ENCODE measurements at regions of chr16 and their contacts with region 1.

Region 1: GRCh38 chr16:85717393-85718121 is 28.8 kb upstream of the GINS2 start:
- DNase-seq: peak; percentile 53 to 74 (median 69)
- H3K4me3 ChIP-seq: no peak overlapping the region
- H3K27ac ChIP-seq: no peak overlapping the region
- H3K4me1 ChIP-seq: no peaks in the 10 kb centered on the region
- H3K27me3 ChIP-seq: no peaks in the 10 kb centered on the region
- CTCF ChIP-seq: peak; percentile 62 to 92 (median 68)
- EP300 ChIP-seq: no peak
- POLR2A ChIP-seq: no peak

Region 2: GRCh38 chr16:85104821-85105391 is 612.7 kb before region 1 on chr16:
- intact Hi-C with region 1: loop called in 2 of 4 experiments (anchors 10 kb)
- DNase-seq: no peak
- H3K4me3 ChIP-seq: no peak overlapping the region
- H3K27ac ChIP-seq: no peak overlapping the region
- H3K4me1 ChIP-seq: no peaks in the 10 kb centered on the region
- H3K27me3 ChIP-seq: no peaks in the 10 kb centered on the region
- CTCF ChIP-seq: no peak
- EP300 ChIP-seq: no peak
- POLR2A ChIP-seq: no peak

Region 3: DNA sequence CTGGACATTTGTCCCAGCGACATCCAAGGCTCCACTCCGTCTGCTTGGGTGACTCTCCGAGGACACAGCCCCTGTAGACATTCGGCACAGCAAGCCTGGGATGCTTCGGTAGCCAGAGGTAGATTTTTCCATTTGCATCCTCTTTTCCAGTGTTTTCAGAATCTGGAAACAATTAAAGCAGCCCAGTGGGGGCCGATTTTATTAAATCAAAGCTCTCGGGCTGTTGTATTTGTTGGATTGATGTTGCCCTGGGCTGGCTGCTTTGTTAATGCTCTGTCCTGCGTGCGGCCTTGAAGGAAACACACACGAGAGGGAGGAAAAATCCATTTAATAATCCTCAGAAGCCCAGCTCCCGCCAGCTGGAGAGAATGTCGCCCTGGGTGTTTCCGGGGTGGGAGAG is 447.2 kb before region 1 on chr16:
- intact Hi-C with region 1: loop called in 2 of 4 experiments (anchors 2 to 5 kb)
- DNase-seq: no peak
- H3K4me3 ChIP-seq: no peak overlapping the region
- H3K27ac ChIP-seq: no peak overlapping the region
- H3K4me1 ChIP-seq: peaks cover 2% of the 10 kb centered on the region
- H3K27me3 ChIP-seq: no peaks in the 10 kb centered on the region
- CTCF ChIP-seq: no peak
- EP300 ChIP-seq: no peak
- POLR2A ChIP-seq: no peak

Region 4: GRCh38 chr16:85275533-85276249 is 441.9 kb before region 1 on chr16:
- intact Hi-C with region 1: loop called in 2 of 4 experiments (anchors 2 to 5 kb)
- DNase-seq: peak; percentile 52 to 84 (median 78)
- H3K4me3 ChIP-seq: no peak overlapping the region
- H3K27ac ChIP-seq: no peak overlapping the region
- H3K4me1 ChIP-seq: peaks cover 7% of the 10 kb centered on the region
- H3K27me3 ChIP-seq: no peaks in the 10 kb centered on the region
- CTCF ChIP-seq: peak; percentile 64 to 80 (median 79)
- EP300 ChIP-seq: no peak
- POLR2A ChIP-seq: no peak

Measured in ovary (tissue), 10 donors.